Motor neuron (in vitro differentiated cells): ENCODE measurements at regions of chr21 and their contacts with region 1.

Region 1: GRCh38 chr21:42818328-42818749 is 61.0 kb downstream of the WDR4 start:
- ATAC-seq: peak in 3 of 8 experiments; percentile 88 to 92 (median 89)
- H3K4me3 ChIP-seq: no peak overlapping the region
- H3K27ac ChIP-seq: no peak overlapping the region
- H3K4me1 ChIP-seq: peaks cover 0 to 2% of the 10 kb centered on the region in 2 donors

Region 2: GRCh38 chr21:42593007-42593806 is 225.1 kb before region 1 on chr21:
- in situ Hi-C with region 1: loop called in 1 of 9 experiments (anchors 25 kb)
- ATAC-seq: peak; percentile 89 to 100 (median 98)
- H3K4me3 ChIP-seq: no peak overlapping the region
- H3K27ac ChIP-seq: no peak overlapping the region
- H3K4me1 ChIP-seq: peaks cover 6 to 10% of the 10 kb centered on the region in 2 donors

Region 3: GRCh38 chr21:42614811-42615659 is 203.3 kb before region 1 on chr21:
- in situ Hi-C with region 1: loop called in 1 of 9 experiments (anchors 25 kb)
- ATAC-seq: peak in 6 of 8 experiments; percentile 11 to 69 (median 52)
- H3K4me3 ChIP-seq: no peak overlapping the region
- H3K27ac ChIP-seq: peak overlapping the region in 1 of 2 donors; percentile 28
- H3K4me1 ChIP-seq: peaks cover 9 to 21% of the 10 kb centered on the region in 2 donors